ENCODE measurements at regions of chr2 and their contacts with region 1.

Region 1: DNA sequence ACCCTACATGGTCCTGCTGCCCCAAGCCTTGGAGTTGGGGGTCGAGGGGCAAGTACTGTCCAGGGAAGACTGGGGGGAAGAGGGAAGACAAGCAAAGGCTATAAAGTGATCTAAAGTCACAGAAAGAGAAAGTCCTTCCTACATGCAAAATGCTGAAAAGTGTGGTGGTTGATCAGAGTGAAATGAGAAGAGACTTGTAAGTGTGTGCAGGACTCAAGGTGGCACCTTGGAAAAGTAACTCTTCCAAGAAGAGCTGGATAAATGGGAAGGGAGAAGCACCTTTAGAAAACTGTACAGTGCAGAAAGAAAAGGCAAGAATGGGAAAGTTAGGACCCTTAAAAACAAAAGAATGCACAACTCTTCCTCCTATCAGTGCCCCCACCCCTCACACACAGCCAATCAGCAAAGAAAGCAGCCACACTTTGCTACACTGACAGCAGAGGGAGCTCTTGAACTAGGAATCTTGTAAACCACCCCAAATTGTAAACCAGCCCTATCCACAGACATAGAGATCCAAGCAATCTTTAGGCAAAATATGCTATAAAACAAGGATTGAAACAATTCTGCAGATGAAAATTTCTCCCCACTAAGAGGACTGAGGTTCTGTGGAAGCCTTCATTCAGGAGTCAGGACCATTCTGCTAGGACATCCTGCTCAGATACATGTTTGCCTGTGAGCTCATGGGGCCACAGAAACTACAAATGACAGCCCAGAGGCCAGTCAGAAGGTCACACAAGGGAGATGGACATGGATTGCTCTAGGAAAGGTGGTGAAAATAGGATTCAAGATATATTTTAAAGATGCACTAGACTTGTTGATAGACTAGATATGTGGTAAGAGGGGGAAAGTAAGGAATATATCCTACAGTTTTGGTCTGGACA is 146.4 kb downstream of the FTCDNL1 start:
- DNase-seq: no peak
- H3K4me3 ChIP-seq: no peak overlapping the region
- H3K27ac ChIP-seq: no peak overlapping the region
- H3K4me1 ChIP-seq: no peaks in the 10 kb centered on the region
- H3K27me3 ChIP-seq: no peaks in the 10 kb centered on the region
- CTCF ChIP-seq: peak; percentile 44 to 60 (median 48)
- EP300 ChIP-seq: no peak
- POLR2A ChIP-seq: no peak

Region 2: DNA sequence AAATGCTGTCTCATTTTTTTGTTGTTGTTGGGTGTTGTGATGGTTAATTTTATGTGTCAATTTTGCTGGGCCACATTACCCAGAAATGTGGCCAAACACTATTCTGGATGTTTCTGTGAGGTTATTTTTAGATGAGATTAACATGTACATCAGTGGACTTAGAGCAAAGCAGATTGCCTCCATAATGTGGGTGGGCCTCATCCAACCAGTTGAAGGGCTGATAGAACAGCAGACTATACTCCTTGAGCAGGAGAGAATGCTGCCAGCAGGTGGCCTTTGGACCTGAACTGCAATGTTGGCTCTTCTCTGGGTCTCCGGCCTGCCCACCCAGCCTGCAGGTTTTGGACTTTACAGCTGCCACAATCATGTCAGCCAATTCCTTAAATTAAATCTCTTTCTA is 22.6 kb before region 1 on chr2:
- intact Hi-C with region 1: no loop called
- DNase-seq: no peak
- H3K4me3 ChIP-seq: no peak overlapping the region
- H3K27ac ChIP-seq: no peak overlapping the region
- H3K4me1 ChIP-seq: no peaks in the 10 kb centered on the region
- H3K27me3 ChIP-seq: no peaks in the 10 kb centered on the region
- CTCF ChIP-seq: no peak
- EP300 ChIP-seq: no peak
- POLR2A ChIP-seq: no peak

Region 3: GRCh38 chr2:199861132-199861774 is 156.7 kb after region 1 on chr2:
- intact Hi-C with region 1: loop called (anchors 5 kb)
- DNase-seq: no peak
- H3K4me3 ChIP-seq: no peak overlapping the region
- H3K27ac ChIP-seq: no peak overlapping the region
- H3K4me1 ChIP-seq: no peaks in the 10 kb centered on the region
- H3K27me3 ChIP-seq: no peaks in the 10 kb centered on the region
- CTCF ChIP-seq: peak in 3 of 4 experiments; percentile 19 to 52 (median 31)
- EP300 ChIP-seq: no peak
- POLR2A ChIP-seq: no peak

Measured in sigmoid colon (tissue), 7 donors.